HEK293 (cell line): ENCODE measurements at regions of chr5 and their contacts with region 1.

Region 1: DNA sequence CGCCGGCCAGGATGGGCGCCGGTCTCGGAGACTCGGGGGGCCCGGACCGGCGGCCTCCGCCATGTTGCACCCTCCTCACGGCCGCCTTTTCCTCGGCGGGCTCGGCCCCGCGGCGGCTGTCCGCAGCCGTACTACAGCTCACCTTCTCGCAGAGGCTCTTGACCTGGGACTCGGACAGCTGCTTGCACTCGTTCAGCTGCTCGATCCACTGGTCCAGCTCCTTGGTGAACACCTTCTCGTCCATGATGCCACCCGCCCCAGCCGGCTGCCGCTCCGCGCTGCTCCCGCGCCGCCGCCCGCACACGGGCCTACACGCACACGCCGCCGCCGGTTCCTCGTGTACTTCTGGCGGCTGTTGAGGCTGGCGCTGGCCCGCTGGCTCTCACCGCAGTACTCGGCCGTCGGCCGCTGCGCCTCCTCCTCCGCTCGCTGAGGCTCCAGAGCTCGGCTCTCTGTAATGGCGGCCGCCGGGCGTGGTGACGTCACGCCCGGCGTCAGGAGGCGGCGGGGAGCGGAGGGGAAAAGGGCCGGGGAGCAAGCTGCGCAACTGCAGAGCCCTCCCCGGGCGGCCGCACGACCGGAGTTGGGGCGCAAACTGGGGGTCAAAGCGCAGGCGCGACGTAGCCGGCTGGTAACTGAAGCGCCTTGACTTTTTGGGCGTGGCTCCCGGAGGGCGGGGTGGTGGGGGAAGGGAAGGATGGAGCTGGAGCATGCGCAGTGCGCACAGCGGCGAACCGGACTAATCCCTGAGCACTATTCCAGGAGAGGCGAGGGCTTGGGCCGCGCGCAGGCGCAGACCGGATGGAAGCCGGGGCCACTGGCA is at the start of gene PPP2CA:
- H3K4me3 ChIP-seq: peak within 1 kb of the TSS; percentile 100
- H3K27ac ChIP-seq: peak within 1 kb of the TSS; percentile 99
- H3K4me1 ChIP-seq: peaks cover 3% of the 10 kb centered on the region
- CTCF ChIP-seq: peak; percentile 72; the same call in 1 of the 2 replicates

Region 2: DNA sequence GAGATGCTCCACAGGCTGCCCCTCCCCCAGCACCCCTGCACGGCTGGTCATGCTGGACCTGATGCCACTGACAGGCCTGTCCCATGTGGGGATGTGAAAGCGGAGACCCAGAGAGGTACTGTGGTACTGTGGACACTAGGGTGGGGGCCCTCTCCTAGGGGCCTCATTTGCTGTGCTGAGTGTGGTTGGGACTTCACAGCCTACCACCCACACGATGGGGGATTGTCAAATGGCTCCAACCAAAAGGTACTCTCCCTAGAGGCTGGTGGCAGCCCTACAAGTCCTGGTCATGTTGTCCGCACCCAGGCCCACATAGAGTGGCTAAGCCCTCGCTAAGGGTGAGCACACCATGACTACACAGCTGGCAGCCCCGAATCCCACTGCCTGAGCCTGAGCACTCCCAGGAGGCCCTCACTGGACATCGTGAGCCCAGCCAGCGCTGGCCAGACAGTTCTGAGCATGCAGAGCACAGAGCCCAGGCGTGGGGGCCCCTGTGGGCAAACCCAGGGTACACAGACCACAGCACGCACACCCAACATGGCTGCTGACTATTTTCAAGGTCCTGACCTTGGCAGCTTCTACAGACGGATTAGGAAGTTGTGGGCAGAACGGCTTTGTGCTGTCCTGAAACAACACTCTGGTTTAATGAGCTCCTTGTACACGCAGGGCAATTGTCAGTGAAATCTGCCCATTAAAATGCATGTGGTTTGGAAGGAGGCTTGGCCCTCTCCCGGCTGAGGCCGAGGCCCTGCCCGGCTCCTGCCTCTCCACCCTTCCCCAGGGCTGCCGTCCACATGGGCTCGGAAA is 959.9 kb before region 1 on chr5:
- CTCF ChIA-PET with region 1: no interaction called
- POLR2A ChIA-PET with region 1: no interaction called
- H3K4me3 ChIP-seq: no peak overlapping the region
- H3K27ac ChIP-seq: no peak overlapping the region
- H3K4me1 ChIP-seq: no peaks in the 10 kb centered on the region
- CTCF ChIP-seq: no peak

Region 3: DNA sequence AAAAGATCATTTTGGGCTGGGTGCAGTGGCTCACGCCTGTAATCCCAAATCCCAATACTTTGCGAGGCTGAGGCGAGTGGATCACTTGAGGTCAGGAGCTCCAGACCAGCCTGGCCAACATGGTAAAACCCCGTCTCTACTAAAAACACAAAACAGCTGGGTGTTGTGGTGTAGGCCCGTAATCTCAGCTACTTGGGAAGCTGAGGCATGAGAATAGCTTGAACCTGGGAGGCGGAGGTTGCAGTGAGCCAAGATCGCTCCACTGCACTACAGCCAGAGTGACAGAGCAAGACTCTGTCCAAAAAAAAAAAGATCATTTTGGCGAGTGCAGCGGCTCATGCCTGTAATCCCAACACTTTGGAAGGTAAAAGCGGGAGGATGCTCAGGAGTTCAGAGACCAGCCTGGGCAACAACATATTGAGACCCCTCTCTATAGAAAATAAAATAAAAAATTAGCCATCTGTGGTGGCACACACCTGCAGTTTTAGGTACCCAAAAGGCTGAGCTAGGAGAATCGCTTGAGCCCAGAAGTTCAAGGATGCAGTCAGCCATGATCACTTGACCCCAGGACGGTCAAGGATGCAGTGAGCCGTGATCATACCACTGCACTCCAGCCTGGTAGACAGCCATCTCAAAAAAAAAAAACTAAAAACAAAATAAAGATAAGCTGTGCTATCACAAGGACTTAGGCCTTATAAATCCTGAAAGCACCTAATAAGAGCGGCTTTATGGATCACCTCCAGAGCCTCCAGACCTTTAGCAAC is 16.2 kb before region 1 on chr5:
- CTCF ChIA-PET with region 1: no interaction called
- POLR2A ChIA-PET with region 1: interaction called, 19 read pairs
- H3K4me3 ChIP-seq: no peak overlapping the region
- H3K27ac ChIP-seq: no peak overlapping the region
- H3K4me1 ChIP-seq: peaks cover 27% of the 10 kb centered on the region
- CTCF ChIP-seq: no peak

Region 4: DNA sequence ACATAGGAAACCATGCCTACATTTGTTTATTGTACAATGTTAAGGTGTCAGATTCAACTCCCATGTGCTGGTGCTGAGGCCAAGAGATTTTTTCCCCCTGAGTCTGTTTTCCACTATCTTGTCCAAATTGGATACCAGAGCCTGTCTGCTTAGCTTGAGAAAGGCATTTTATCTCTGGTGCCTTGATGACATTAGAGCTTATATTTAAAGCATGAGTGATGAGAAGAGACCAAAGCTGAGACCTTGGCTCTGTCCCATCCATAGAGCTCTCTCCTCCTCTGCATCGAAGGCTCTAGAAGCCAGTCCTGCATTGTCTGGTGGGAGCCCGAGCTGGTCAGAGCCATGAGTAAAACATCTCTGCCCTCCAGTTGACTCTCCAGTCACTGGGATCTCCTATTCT is 10.5 kb after region 1 on chr5:
- CTCF ChIA-PET with region 1: interaction called, 3 read pairs
- POLR2A ChIA-PET with region 1: interaction called, 23 read pairs
- H3K4me3 ChIP-seq: no peak overlapping the region
- H3K27ac ChIP-seq: no peak overlapping the region
- H3K4me1 ChIP-seq: peaks cover 4% of the 10 kb centered on the region; the same call in 1 of the 2 replicates
- CTCF ChIP-seq: no peak

Region 5: DNA sequence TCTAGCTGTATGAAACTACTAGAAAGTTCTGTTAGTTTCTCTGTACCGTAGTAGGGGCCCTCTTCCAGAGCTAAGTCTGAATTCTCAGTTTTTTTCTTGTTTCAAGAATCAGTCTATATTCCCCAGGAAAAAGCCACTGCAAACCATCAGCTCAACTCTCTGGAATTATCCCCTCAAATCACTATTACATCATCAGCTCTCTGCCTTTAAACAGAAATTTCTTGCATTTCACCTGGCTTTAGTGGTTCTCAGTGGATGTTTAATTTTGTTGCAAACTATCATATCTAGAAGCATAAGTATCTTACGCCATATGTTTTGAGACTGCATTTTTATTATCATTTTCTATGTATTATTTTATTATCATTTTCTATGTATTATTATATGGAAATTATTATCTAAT is 55.3 kb after region 1 on chr5:
- CTCF ChIA-PET with region 1: interaction called, 4 read pairs
- POLR2A ChIA-PET with region 1: interaction called, 17 read pairs
- H3K4me3 ChIP-seq: no peak overlapping the region
- H3K27ac ChIP-seq: no peak overlapping the region
- H3K4me1 ChIP-seq: peaks cover 5% of the 10 kb centered on the region
- CTCF ChIP-seq: no peak

Region 6: DNA sequence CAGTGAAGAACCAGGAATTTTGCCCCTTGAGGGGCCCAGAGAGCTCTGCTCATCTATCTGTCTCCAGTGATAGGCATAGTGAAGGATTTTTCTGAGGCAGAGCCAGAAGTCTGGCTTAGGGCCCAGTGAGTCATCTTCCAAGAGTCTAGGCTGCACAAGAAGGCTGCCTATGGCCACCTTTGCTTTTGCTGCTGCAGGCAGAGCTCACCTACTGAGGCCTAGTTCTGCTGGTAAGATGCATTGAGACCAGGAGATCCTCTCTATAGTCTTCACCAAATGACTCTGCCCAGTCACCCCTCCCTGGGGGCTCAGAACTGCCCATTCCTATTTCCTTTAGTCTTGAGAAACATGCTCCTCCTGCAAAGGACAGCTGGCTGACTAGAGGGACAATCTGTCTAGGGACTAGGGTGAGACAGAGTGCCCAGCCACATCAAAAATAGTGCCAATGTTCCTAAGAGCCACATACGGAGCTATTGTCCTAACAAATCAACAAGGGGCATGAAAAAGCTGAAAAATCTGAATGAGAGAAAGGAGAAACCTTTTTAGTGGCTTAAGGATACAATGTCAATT is 226.2 kb after region 1 on chr5:
- CTCF ChIA-PET with region 1: no interaction called
- POLR2A ChIA-PET with region 1: no interaction called
- H3K4me3 ChIP-seq: no peak overlapping the region
- H3K27ac ChIP-seq: no peak overlapping the region
- H3K4me1 ChIP-seq: peaks cover 2% of the 10 kb centered on the region; the same call in 1 of the 2 replicates
- CTCF ChIP-seq: no peak

Region 7: GRCh38 chr5:134736173-134736812 is 510.5 kb after region 1 on chr5:
- CTCF ChIA-PET with region 1: no interaction called
- POLR2A ChIA-PET with region 1: no interaction called
- H3K4me3 ChIP-seq: no peak overlapping the region
- H3K27ac ChIP-seq: no peak overlapping the region
- H3K4me1 ChIP-seq: peaks cover 10% of the 10 kb centered on the region
- CTCF ChIP-seq: no peak